ENCODE measurements at regions of chr13 and their contacts with region 1.

Region 1: GRCh38 chr13:27977476-27978300 is 8.6 kb upstream of the CDX2 start:
- DNase-seq: no peak
- ATAC-seq: no peak
- H3K4me3 ChIP-seq: no peak overlapping the region
- H3K27ac ChIP-seq: no peak overlapping the region
- H3K4me1 ChIP-seq: no peaks in the 10 kb centered on the region
- H3K27me3 ChIP-seq: peaks cover 27 to 45% of the 10 kb centered on the region in 2 experiments
- CTCF ChIP-seq: no peak
- EP300 ChIP-seq: no peak
- POLR2A ChIP-seq: no peak
- RAD21 ChIP-seq: no peak

Region 2: DNA sequence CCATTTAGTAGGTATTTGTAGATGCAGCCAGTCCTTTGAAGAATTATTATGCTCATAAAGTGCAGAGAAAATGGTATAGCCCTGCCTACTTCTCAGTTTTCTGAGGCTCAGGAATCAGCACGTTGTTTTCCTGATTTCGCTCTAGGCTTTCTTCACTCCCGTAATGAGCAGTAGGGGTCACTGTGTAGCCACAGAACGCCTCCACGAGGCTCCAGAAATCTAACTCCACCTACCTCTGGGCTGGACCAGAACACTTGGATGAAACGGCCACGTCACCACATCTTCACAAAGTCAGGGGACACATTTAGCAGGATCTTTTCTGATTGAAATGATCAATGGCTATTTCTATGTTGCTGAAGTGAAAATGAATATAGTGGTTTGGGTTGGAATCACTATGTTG is 603.0 kb before region 1 on chr13:
- CTCF ChIA-PET with region 1: no interaction called
- POLR2A ChIA-PET with region 1: no interaction called
- RAD21 ChIA-PET with region 1: no interaction called
- SMC1A ChIA-PET with region 1: no interaction called
- in situ Hi-C with region 1: loop called (anchors 5 kb)
- intact Hi-C with region 1: no loop called
- DNase-seq: no peak
- ATAC-seq: peak; percentile 96
- H3K4me3 ChIP-seq: no peak overlapping the region
- H3K27ac ChIP-seq: no peak overlapping the region
- H3K4me1 ChIP-seq: no peaks in the 10 kb centered on the region
- H3K27me3 ChIP-seq: no peaks in the 10 kb centered on the region
- CTCF ChIP-seq: peak; percentile 68 to 86 (median 80)
- EP300 ChIP-seq: no peak
- POLR2A ChIP-seq: no peak
- RAD21 ChIP-seq: peak; percentile 84

Region 3: DNA sequence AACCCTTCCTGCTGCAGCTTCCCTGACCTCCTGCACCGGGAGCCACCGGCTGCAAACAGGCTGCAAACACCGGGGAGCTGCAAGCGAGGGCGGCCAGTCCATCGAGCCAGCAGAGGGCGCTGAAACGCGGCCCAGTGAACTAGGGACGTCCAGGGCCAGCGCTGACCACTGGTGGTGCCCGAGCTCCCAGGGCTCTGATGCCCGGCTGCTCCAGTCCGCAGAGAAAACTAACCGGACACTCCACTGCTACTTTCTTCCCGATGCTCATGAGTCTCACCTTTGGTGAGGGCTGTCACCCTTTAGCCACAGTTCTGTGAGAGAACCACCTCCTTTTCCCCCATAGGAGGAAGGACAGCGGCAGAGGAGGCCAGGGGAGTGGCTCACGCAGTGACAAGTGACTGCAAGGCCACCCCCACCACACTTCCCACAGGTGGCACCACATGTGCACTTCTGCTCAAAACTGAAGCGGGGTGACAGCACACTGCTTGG is 444.5 kb before region 1 on chr13:
- CTCF ChIA-PET with region 1: interaction called, 3 read pairs
- POLR2A ChIA-PET with region 1: no interaction called
- RAD21 ChIA-PET with region 1: no interaction called
- SMC1A ChIA-PET with region 1: no interaction called
- in situ Hi-C with region 1: loop called (anchors 10 kb)
- intact Hi-C with region 1: no loop called
- DNase-seq: no peak
- ATAC-seq: peak; percentile 92
- H3K4me3 ChIP-seq: no peak overlapping the region
- H3K27ac ChIP-seq: no peak overlapping the region
- H3K4me1 ChIP-seq: no peaks in the 10 kb centered on the region
- H3K27me3 ChIP-seq: no peaks in the 10 kb centered on the region
- CTCF ChIP-seq: peak; percentile 69 to 87 (median 79)
- EP300 ChIP-seq: no peak
- POLR2A ChIP-seq: no peak
- RAD21 ChIP-seq: peak; percentile 58

Region 4: GRCh38 chr13:27770809-27771208 is 206.9 kb before region 1 on chr13:
- CTCF ChIA-PET with region 1: interaction called, 12 read pairs
- POLR2A ChIA-PET with region 1: no interaction called
- RAD21 ChIA-PET with region 1: no interaction called
- SMC1A ChIA-PET with region 1: no interaction called
- in situ Hi-C with region 1: no loop called
- intact Hi-C with region 1: no loop called
- DNase-seq: no peak
- ATAC-seq: peak; percentile 86
- H3K4me3 ChIP-seq: no peak overlapping the region
- H3K27ac ChIP-seq: no peak overlapping the region
- H3K4me1 ChIP-seq: peaks cover 3% of the 10 kb centered on the region; the same call in 1 of the 2 replicates
- H3K27me3 ChIP-seq: peaks cover 0 to 1% of the 10 kb centered on the region in 2 experiments; a peak in 1 of 4 replicates
- CTCF ChIP-seq: peak; percentile 59 to 67 (median 64)
- EP300 ChIP-seq: no peak
- POLR2A ChIP-seq: no peak
- RAD21 ChIP-seq: peak; percentile 49

Region 5: DNA sequence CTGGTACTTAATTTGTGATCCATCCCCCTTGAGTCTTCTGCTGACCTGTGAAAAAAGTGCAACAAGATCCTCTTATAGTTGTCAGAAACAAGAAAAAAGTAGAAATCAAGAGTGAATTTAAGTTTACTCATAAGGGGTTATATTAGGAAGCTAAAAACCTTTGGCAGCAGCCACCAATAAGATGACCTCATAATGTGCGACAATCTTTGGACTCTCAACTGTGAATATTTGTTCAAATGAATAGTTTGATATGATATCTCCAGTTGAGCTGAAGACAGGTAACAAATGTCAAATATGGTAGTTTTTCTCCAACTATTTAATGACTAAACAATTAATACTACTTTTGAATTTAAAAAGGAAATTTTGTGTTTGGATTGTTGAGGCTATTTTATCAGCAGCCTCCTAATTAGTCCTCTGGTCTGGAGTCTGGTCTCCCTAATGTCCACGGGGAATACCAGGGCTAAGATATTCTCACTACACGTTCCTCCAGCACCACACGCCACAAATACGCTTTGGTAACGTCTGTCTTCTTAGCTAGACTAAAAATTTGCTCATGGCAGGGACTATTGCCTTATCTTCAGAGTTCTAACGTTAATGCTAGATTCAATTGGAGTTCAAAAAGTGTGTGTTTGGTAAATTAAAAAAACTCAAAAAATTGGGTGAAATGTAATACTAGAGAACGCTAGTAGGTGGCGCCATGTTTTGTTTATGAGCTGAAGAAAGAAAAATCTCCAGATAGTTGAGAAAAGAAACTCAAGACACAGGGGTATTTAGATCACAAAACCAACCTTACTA is 108.8 kb before region 1 on chr13:
- CTCF ChIA-PET with region 1: interaction called, 37 read pairs
- POLR2A ChIA-PET with region 1: no interaction called
- RAD21 ChIA-PET with region 1: no interaction called
- SMC1A ChIA-PET with region 1: no interaction called
- in situ Hi-C with region 1: no loop called
- intact Hi-C with region 1: no loop called
- DNase-seq: no peak
- ATAC-seq: peak; percentile 19; the same call in 1 of the 3 replicates
- H3K4me3 ChIP-seq: no peak overlapping the region
- H3K27ac ChIP-seq: no peak overlapping the region
- H3K4me1 ChIP-seq: no peaks in the 10 kb centered on the region
- H3K27me3 ChIP-seq: no peaks in the 10 kb centered on the region; a peak in 1 of 4 replicates
- CTCF ChIP-seq: peak; percentile 43 to 55 (median 48); a peak in 5 of 6 replicates
- EP300 ChIP-seq: no peak
- POLR2A ChIP-seq: no peak
- RAD21 ChIP-seq: peak; percentile 50

Region 6: DNA sequence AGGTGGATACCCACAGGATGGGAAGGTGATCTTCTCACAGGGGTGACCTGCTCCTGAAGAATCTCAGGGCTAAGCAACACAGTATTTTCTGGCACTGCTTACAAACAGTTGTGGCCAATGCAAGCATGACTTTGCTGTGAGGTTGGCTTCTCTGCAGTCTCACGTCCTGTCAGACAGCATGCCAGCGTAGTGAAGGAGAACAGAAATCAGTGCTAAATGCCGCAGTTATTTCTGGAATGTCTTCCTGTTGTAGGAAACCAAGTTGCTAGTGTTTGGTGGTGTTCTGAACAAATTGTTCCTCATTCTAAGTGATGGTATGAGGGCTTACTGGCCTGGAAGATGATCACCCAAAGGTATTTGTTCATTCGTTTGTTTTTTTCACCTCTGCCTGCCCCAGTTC is 1162.6 kb after region 1 on chr13:
- CTCF ChIA-PET with region 1: no interaction called
- POLR2A ChIA-PET with region 1: no interaction called
- RAD21 ChIA-PET with region 1: no interaction called
- SMC1A ChIA-PET with region 1: no interaction called
- in situ Hi-C with region 1: no loop called
- intact Hi-C with region 1: no loop called
- DNase-seq: no peak
- ATAC-seq: no peak
- H3K4me3 ChIP-seq: no peak overlapping the region
- H3K27ac ChIP-seq: no peak overlapping the region
- H3K4me1 ChIP-seq: no peaks in the 10 kb centered on the region
- H3K27me3 ChIP-seq: no peaks in the 10 kb centered on the region
- CTCF ChIP-seq: no peak
- EP300 ChIP-seq: no peak
- POLR2A ChIP-seq: no peak
- RAD21 ChIP-seq: no peak